GM12878 (cell line): ENCODE measurements at regions of chr2 and their contacts with region 1.

Region 1: GRCh38 chr2:136135921-136136906 is 18.3 kb upstream of the CXCR4 start:
- DNase-seq: no peak
- ATAC-seq: peak; percentile 64
- H3K4me3 ChIP-seq: no peak overlapping the region
- H3K27ac ChIP-seq: no peak overlapping the region
- H3K4me1 ChIP-seq: peaks cover 42% of the 10 kb centered on the region
- H3K27me3 ChIP-seq: peaks cover 0 to 21% of the 10 kb centered on the region in 2 experiments; a peak in 2 of 4 replicates
- CTCF ChIP-seq: no peak
- EP300 ChIP-seq: peak; percentile 97; a peak in 3 of 4 replicates
- POLR2A ChIP-seq: no peak
- RAD21 ChIP-seq: no peak

Region 2: GRCh38 chr2:135931776-135932443 is 204.3 kb before region 1 on chr2:
- CTCF ChIA-PET with region 1: interaction called, 3 read pairs
- POLR2A ChIA-PET with region 1: no interaction called
- RAD21 ChIA-PET with region 1: no interaction called
- SMC1A ChIA-PET with region 1: interaction called, 4 read pairs
- in situ Hi-C with region 1: no loop called
- intact Hi-C with region 1: loop called (anchors 5 kb)
- DNase-seq: no peak
- ATAC-seq: peak; percentile 95
- H3K4me3 ChIP-seq: no peak overlapping the region
- H3K27ac ChIP-seq: no peak overlapping the region
- H3K4me1 ChIP-seq: peaks cover 6% of the 10 kb centered on the region
- H3K27me3 ChIP-seq: no peaks in the 10 kb centered on the region
- CTCF ChIP-seq: no peak
- EP300 ChIP-seq: peak; percentile 45 to 53; a peak in 2 of 4 replicates
- POLR2A ChIP-seq: no peak
- RAD21 ChIP-seq: no peak

Region 3: DNA sequence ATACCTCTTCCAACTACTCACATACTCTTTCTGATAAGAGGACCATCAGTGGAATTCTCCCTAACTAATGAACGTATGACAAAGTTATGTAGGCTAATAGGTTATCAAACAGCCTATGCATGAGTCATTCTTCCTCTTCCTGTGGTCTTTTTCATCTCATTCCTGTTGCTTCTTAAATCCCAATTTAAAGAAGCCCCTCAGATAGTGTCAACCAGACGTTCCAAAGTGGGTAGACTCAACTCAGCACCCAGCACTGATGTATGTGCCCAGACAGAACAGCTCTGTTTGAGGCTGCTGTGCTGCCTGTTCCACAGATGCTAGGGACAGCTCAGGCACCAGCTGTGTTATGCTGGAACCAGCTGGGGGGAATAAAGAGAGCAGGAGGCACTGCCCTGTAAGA is 70.8 kb before region 1 on chr2:
- CTCF ChIA-PET with region 1: no interaction called
- POLR2A ChIA-PET with region 1: interaction called, 3 read pairs
- RAD21 ChIA-PET with region 1: interaction called, 301 read pairs
- SMC1A ChIA-PET with region 1: interaction called, 234 read pairs
- in situ Hi-C with region 1: no loop called
- intact Hi-C with region 1: no loop called
- DNase-seq: no peak
- ATAC-seq: peak; percentile 66
- H3K4me3 ChIP-seq: no peak overlapping the region
- H3K27ac ChIP-seq: no peak overlapping the region
- H3K4me1 ChIP-seq: peaks cover 12% of the 10 kb centered on the region
- H3K27me3 ChIP-seq: peaks cover 0 to 3% of the 10 kb centered on the region in 2 experiments; a peak in 1 of 4 replicates
- CTCF ChIP-seq: no peak
- EP300 ChIP-seq: no peak
- POLR2A ChIP-seq: no peak
- RAD21 ChIP-seq: no peak

Region 4: GRCh38 chr2:136154402-136154783 is 18.2 kb after region 1 on chr2:
- CTCF ChIA-PET with region 1: interaction called, 4 read pairs
- POLR2A ChIA-PET with region 1: interaction called, 7 read pairs
- RAD21 ChIA-PET with region 1: interaction called, 6 read pairs
- SMC1A ChIA-PET with region 1: interaction called, 35 read pairs
- in situ Hi-C with region 1: no loop called
- intact Hi-C with region 1: no loop called
- DNase-seq: no peak
- ATAC-seq: no peak
- H3K4me3 ChIP-seq: no peak overlapping the region
- H3K27ac ChIP-seq: no peak overlapping the region
- H3K4me1 ChIP-seq: no peaks in the 10 kb centered on the region
- H3K27me3 ChIP-seq: peaks cover 0 to 2% of the 10 kb centered on the region in 2 experiments; a peak in 3 of 4 replicates
- CTCF ChIP-seq: no peak
- EP300 ChIP-seq: no peak
- POLR2A ChIP-seq: no peak
- RAD21 ChIP-seq: no peak

Region 5: GRCh38 chr2:136217996-136218395 is 81.8 kb after region 1 on chr2:
- CTCF ChIA-PET with region 1: interaction called, 4 read pairs
- POLR2A ChIA-PET with region 1: interaction called, 4 read pairs
- RAD21 ChIA-PET with region 1: interaction called, 73 read pairs
- SMC1A ChIA-PET with region 1: interaction called, 202 read pairs
- in situ Hi-C with region 1: no loop called
- intact Hi-C with region 1: no loop called
- DNase-seq: no peak
- ATAC-seq: peak; percentile 77
- H3K4me3 ChIP-seq: no peak overlapping the region
- H3K27ac ChIP-seq: no peak overlapping the region
- H3K4me1 ChIP-seq: no peaks in the 10 kb centered on the region
- H3K27me3 ChIP-seq: peaks cover 0 to 9% of the 10 kb centered on the region in 2 experiments; a peak in 1 of 4 replicates
- CTCF ChIP-seq: no peak
- EP300 ChIP-seq: peak in 1 of 2 experiments; percentile 40; a peak in 1 of 4 replicates
- POLR2A ChIP-seq: no peak
- RAD21 ChIP-seq: no peak

Region 6: DNA sequence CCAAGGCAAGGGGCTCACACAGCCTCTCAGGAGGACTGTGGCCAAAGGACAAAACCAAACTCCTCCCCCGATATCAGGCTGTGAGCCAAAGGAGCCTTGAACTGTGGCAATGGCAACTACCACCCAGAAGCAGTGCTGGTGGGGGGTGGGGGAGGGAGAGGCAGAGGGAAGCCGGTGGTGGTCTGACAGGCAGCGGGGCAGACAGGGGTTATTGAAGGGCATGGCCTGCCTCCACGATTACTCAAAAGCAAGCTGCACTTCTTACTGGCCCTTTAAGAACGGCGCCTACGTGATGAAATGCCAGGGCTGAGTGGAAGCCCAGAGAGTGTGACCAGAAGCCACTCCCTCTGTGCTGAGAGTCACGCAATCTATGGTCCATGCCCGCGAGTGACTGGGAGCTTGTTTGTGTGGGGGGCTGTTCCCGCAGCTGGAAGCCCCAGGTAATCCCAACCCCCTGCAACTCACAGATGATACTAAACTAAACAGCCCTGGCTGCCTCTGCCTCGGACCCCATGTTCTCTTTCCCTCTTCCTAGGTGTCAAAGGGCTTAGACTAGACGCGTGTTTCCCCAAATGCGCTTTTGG is 110.0 kb after region 1 on chr2:
- CTCF ChIA-PET with region 1: no interaction called
- POLR2A ChIA-PET with region 1: interaction called, 4 read pairs
- RAD21 ChIA-PET with region 1: interaction called, 49 read pairs
- SMC1A ChIA-PET with region 1: interaction called, 51 read pairs
- in situ Hi-C with region 1: no loop called
- intact Hi-C with region 1: no loop called
- DNase-seq: peak; percentile 60
- ATAC-seq: peak; percentile 96
- H3K4me3 ChIP-seq: no peak overlapping the region
- H3K27ac ChIP-seq: no peak overlapping the region; the same call in 1 of the 2 replicates
- H3K4me1 ChIP-seq: peaks cover 3% of the 10 kb centered on the region; the same call in 1 of the 2 replicates
- H3K27me3 ChIP-seq: 0 out of 4 replicates have a peak, but pooled peaks cover 0 to 2% of the 10 kb centered on the region in 2 experiments
- CTCF ChIP-seq: no peak
- EP300 ChIP-seq: peak; percentile 78 to 87; a peak in 3 of 4 replicates
- POLR2A ChIP-seq: no peak
- RAD21 ChIP-seq: no peak

Region 7: DNA sequence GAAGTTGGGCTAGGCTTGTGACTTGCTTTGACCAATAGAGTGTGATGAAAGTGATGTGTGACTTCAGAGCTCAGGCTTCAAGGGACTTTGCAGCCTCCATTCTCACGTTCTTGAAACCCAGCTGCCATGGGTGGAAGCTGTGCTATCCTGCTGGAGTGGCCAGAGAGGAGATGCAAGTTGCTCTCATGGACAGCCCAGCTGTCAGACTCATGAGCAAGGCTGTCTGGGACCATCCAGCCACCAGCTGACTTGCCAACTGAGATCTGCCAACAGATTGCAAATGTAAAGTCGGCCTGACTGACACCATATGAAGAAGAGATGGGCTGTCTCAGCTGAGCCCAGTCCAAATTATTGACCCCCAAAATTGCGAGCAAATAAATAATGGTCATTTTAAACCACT is 208.1 kb after region 1 on chr2:
- CTCF ChIA-PET with region 1: no interaction called
- POLR2A ChIA-PET with region 1: no interaction called
- RAD21 ChIA-PET with region 1: no interaction called
- SMC1A ChIA-PET with region 1: no interaction called
- in situ Hi-C with region 1: no loop called
- intact Hi-C with region 1: no loop called
- DNase-seq: no peak
- ATAC-seq: no peak
- H3K4me3 ChIP-seq: no peak overlapping the region
- H3K27ac ChIP-seq: no peak overlapping the region
- H3K4me1 ChIP-seq: no peaks in the 10 kb centered on the region
- H3K27me3 ChIP-seq: 0 out of 4 replicates have a peak, but pooled peaks cover 0 to 2% of the 10 kb centered on the region in 2 experiments
- CTCF ChIP-seq: no peak
- EP300 ChIP-seq: no peak
- POLR2A ChIP-seq: no peak
- RAD21 ChIP-seq: no peak

Region 8: DNA sequence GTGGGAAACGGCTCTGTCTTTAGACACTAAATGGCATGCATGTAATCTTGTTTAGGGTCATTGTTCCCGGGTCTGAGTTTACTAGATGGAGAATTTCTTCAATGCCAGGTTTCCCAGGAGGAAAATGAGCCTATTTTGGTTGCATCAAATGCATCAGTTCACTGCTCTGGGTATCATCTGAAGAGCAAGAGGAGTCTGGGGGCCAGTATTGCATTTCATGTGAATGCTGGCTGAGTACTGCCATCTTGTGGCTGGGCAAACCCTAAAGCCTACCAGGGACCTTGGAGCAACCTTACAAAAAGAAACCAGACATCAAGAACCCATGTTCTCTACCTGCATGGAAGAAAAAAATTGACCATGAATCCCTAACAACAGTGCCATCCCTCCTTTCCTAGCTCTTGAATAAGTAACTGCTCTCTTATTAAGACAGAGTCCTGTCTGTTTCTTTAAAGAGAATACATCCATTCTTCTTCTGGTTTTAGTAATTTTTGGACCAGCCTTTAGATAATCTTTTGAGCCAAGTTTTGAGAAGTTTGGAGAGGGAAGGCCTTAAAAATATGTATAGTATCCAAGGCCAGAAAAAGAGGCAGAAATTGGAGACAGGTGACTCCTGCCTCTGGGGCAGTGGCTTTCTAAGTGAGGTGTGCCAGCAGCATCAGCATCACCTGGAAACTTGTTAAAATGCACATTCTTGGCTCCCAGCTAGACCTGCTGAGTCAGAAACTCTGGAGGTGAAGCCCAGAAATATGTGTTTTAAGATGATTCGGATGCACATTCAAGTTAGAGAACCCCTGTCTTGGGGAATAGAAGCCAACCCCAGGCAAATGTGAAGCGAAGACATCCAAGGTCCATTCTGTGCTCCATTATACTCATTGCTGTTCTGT is 242.7 kb after region 1 on chr2:
- CTCF ChIA-PET with region 1: interaction called, 17 read pairs
- POLR2A ChIA-PET with region 1: interaction called, 5 read pairs
- RAD21 ChIA-PET with region 1: interaction called, 148 read pairs
- SMC1A ChIA-PET with region 1: interaction called, 81 read pairs
- in situ Hi-C with region 1: loop called (anchors 5 kb)
- intact Hi-C with region 1: loop called (anchors 1 kb)
- DNase-seq: no peak
- ATAC-seq: peak; percentile 55
- H3K4me3 ChIP-seq: no peak overlapping the region
- H3K27ac ChIP-seq: no peak overlapping the region
- H3K4me1 ChIP-seq: peaks cover 51% of the 10 kb centered on the region
- H3K27me3 ChIP-seq: no peaks in the 10 kb centered on the region
- CTCF ChIP-seq: peak; percentile 85 to 92 (median 86)
- EP300 ChIP-seq: no peak
- POLR2A ChIP-seq: no peak
- RAD21 ChIP-seq: peak; percentile 96